Aorta (tissue), 5 donors: ENCODE measurements at regions of chr12 and their contacts with region 1.

Region 1: DNA sequence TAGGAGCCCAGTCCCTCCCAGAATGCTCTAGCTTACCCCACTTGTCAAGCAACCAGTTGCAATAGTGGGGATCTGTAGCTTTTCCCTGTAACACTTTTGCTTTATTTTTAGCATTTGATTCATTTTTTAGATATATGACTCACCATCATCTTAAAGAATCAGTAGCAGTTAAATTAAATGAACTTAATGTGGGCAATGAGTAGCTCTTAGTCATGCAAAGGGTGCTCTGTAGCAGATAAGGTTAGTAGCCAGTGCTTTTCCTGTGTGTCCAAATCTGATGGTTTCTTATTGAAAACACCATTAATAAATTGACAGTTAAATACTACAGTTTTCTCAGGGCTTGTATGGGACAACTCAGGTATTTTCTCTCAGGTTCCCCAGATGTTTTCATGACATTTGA is 311.8 kb downstream of the RERGL start:
- DNase-seq: no peak
- ATAC-seq: no peak
- H3K4me3 ChIP-seq: no peak overlapping the region
- H3K27ac ChIP-seq: no peak overlapping the region
- H3K4me1 ChIP-seq: no peaks in the 10 kb centered on the region
- H3K27me3 ChIP-seq: no peaks in the 10 kb centered on the region

Region 2: DNA sequence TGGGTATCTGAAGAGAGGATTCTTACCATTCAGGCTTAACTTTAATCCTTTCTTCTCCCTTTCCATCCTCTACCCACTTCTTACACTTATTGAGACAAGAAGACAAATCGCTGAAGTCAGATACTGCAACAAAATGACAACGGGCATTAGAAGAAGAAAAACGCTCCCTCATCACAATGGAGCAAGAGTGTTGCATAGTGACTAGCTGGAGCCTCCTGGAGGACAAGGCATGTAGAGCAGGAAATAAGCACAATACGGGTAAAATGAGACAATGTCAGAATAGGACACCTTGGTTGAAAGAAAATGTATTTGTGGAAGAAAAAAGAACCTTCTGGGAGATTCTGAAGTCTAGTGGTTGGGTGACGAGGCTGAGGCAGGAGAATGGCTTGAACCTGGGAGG is 189.3 kb before region 1 on chr12:
- intact Hi-C with region 1: no loop called
- DNase-seq: no peak
- ATAC-seq: no peak
- H3K4me3 ChIP-seq: no peak overlapping the region
- H3K27ac ChIP-seq: no peak overlapping the region
- H3K4me1 ChIP-seq: no peaks in the 10 kb centered on the region
- H3K27me3 ChIP-seq: peaks cover 0 to 1% of the 10 kb centered on the region in 2 donors

Region 3: DNA sequence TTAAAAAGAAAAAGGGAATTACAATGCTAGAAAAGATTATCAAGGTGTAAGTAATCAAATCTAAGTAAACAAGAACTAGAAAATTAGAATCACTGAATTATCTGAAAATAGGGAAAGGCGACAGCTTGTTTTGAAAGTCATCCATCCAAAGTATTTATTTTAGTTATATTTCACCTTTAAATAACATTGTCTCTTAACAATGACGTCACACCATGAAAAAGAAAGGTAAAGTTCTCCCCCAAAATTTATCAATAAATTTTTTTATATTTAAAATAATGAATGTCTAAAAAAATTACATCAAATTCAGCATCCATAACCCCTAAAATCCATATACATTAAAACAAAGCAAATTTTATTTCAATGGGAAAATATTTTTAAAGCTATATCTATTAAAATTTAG is 88.6 kb after region 1 on chr12:
- intact Hi-C with region 1: loop called (anchors 5 kb)
- DNase-seq: no peak
- ATAC-seq: no peak
- H3K4me3 ChIP-seq: no peak overlapping the region
- H3K27ac ChIP-seq: no peak overlapping the region
- H3K4me1 ChIP-seq: no peaks in the 10 kb centered on the region
- H3K27me3 ChIP-seq: no peaks in the 10 kb centered on the region

Region 4: DNA sequence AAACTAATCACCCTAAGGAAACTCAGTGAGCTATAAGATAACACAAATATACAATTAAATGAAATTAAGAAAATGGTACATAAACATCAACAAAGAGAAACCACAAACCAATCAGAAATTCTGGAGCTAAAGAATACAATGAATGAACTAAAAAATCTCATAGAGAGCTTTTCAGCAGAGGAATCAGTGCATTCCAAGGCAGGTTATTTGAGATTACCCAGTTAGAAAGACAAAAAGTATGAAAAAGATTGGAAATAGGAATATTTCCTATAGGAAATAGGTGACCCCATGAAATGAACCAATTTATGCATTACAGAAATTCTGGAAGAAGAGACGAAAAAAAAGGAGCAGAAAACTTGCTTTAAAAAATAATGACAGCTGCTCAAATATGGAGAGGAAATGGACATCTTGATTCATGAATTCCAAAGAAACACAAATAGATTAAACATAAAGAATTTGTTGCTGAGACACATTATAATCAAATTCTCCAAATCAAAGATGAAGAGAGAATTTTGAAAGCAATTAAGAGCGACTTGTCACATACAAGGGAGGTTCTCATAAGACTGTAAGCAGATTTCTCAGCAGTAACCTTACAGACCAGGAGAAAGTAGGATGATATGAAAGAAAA is 221.0 kb after region 1 on chr12:
- intact Hi-C with region 1: no loop called
- DNase-seq: no peak
- ATAC-seq: no peak
- H3K4me3 ChIP-seq: no peak overlapping the region
- H3K27ac ChIP-seq: no peak overlapping the region
- H3K4me1 ChIP-seq: no peaks in the 10 kb centered on the region
- H3K27me3 ChIP-seq: no peaks in the 10 kb centered on the region